Stomach (tissue), 19 donors: ENCODE measurements at regions of chr2 and their contacts with region 1.

Region 1: DNA sequence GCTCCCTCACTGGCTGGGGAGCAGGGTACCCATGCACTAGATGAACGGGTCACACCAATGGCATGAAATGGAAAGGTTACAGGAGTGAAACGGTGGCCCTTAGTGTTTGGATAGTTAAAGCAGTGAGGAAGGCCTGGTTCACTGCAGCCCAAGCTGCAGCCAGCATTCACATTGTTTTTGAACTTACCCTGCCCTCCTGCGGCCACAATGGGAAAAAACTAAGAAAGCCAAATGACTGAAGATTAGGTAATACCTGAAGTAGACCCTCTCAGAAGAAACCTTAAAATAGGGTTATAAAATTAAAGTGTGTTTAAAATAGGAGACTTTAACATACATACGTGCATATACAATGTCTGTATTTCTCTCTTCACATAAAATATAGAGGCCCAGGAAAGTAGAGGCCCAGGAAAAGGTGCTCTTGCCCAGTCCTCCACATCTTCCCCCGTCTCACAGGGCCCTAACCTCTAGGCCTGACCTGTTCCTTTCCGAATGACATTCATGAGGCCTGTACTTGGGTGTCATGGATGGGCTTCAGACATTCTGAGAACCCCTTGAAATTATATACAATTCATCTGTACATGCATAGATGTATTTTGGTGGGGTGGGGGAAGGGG is 33.3 kb downstream of the DOK1 start:
- DNase-seq: peak; percentile 69 to 90
- H3K4me3 ChIP-seq: no peak overlapping the region
- H3K27ac ChIP-seq: no peak overlapping the region
- H3K4me1 ChIP-seq: peaks cover 0 to 6% (median 0%) of the 10 kb centered on the region in 4 donors
- H3K27me3 ChIP-seq: peaks cover 0 to 34% (median 4%) of the 10 kb centered on the region in 3 donors
- CTCF ChIP-seq: peak in 5 of 7 experiments; percentile 45 to 64 (median 47)
- EP300 ChIP-seq: no peak
- POLR2A ChIP-seq: no peak

Region 2: DNA sequence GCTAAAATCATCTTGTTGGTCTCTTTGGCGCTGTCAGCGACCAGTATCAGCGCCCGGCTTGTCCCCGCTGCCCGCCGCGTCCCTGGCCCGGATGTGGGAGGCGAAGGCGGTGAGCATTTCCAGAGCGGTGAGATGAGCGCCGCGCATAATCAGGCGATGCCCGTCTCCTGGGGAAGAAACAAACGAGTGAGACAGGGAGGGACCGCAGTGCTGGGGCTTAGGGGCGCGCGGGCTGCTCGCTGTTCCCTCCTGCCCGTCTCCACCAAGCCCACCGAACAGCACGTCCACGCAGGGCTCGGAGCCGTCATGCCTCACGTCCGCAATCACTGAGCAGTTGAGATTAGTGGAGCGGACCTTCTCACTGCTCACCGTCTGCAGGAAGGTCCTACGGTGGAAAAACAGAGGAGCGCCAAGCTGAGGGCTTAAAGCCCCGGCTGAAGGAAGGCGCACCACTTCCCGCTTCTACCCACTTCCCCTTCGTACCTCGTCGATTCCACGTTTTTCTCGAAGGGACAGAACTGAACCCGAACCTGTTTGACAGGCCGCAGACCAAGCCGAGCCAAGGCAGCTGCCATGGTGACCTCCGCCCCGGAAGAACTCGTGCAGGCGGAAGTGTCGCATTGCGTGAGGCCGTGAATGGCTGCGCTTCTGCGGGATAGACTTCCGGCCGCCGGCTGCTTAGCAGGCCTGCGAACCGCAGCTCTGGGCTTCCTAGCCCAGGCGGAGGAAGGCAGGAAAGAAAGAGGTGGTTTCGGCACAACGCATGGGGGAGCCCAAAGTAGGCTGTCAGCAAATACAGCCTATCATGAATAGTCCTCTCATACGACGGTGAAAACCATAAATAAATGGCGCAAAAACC is 115.5 kb before region 1 on chr2 and contains the start of gene MRPL53:
- intact Hi-C with region 1: no loop called
- DNase-seq: peak; percentile 95 to 98
- H3K4me3 ChIP-seq: peak within 1 kb of the TSS; percentile 54 to 82 (median 66)
- H3K27ac ChIP-seq: peak within 1 kb of the TSS; percentile 78 to 93 (median 86)
- H3K4me1 ChIP-seq: peaks cover 14 to 27% (median 25%) of the 10 kb centered on the region in 4 donors
- H3K27me3 ChIP-seq: no peaks in the 10 kb centered on the region
- CTCF ChIP-seq: no peak
- EP300 ChIP-seq: no peak
- POLR2A ChIP-seq: peak in 1 of 4 donors; percentile 57
- total RNA-seq, gene MRPL53: 4.6 to 335 (median 18.0) TPM

Region 3: DNA sequence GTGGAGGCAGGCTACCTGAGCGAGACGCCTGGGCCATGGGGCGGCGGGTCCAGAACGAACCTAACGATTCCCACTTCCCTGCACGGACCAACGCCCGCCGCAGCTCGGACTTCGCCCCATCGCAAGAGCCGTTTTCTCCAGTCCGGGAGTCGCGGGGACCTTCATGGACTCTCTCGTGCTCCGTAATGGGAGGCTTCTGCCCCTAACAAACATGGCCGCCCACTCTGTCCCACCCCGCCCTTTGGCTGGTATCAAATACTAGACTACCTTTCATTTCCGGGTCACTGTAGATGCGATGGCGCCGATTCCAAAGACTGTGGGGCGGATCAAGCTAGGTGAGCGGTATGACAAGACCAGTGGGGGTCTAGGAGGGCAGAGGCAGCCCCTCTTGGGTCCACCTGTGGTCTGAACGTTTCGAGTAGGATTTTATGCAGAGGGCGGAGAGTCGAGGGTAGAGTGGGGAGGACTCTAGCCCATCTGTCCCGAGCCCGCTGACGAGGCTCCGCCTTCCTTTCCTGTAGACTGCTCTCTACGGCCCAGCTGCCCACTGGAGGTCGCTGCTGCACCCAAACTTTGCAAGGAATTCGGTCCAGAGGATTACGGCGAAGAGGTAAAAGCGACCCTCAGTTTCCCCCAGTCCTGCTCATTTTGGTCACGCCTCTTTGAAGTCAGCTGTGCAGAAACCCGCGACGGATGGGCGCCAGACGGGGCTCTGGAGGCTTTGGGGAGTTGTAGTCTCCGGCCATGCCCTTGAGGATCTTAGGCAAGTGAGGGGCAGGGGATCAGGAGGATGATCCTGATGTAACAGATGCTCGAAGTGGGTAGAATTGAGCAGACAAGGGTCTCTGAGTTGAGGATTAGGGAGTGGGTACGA is 104.7 kb before region 1 on chr2 and contains the starts of genes CCDC142 and TTC31:
- intact Hi-C with region 1: loop called (anchors 5 kb)
- DNase-seq: peak; percentile 97 to 99
- H3K4me3 ChIP-seq: peak within 1 kb of the TSS; percentile 76 to 98 (median 92)
- H3K27ac ChIP-seq: peak within 1 kb of the TSS; percentile 80 to 94 (median 92)
- H3K4me1 ChIP-seq: peaks cover 20 to 49% (median 41%) of the 10 kb centered on the region in 4 donors
- H3K27me3 ChIP-seq: no peaks in the 10 kb centered on the region
- CTCF ChIP-seq: peak in 5 of 7 experiments; percentile 63 to 91 (median 78)
- EP300 ChIP-seq: no peak
- POLR2A ChIP-seq: no peak
- total RNA-seq, gene CCDC142: 19.1 to 78.2 (median 51.3) TPM
- total RNA-seq, gene TTC31: 4.7 to 91.2 (median 20.5) TPM

Region 4: DNA sequence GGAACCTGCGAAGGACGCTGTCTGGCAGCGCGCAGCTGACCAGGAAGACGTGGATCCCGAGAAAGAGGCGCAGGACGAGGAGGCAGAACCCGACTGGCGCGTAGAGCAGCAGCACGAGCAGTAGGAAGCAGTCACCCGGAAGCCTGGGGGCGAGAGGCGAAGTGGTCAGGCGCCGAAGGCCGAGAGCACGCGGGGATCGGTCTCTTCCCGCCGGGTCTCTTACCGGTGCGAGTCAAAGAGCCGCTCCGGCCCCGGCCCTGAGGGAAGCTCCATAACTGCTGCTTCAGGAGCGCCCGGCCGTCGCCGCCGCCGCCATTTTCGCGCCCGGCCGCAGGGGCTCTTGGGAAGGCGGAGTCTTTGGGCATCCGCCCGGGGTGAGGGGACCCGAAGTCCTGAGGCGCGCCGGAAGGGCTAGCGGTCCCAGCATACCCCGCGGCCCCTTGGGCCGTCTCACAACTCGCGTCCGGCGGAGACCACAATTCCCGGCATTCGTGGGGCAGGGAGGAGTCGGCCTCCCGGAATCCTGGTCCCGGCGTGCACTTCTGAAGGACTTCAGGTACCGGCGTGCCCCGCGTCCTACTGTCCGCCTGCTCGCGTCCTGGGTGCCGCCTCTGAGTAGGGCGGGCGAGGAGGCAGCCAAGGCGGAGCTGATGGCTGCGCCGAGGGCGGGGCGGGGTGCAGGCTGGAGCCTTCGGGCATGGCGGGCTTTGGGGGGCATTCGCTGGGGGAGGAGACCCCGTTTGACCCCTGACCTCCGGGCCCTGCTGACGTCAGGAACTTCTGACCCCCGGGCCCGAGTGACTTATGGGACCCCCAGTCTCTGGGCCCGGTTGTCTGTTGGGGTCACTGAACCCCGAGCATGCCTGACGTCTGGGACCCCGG is 58.2 kb before region 1 on chr2 and contains the starts of genes AUP1 and HTRA2:
- intact Hi-C with region 1: loop called (anchors 10 kb)
- DNase-seq: peak; percentile 99 to 100
- H3K4me3 ChIP-seq: peak within 1 kb of the TSS; percentile 78 to 94 (median 92)
- H3K27ac ChIP-seq: peak within 1 kb of the TSS; percentile 68 to 96 (median 91)
- H3K4me1 ChIP-seq: peaks cover 25 to 53% (median 35%) of the 10 kb centered on the region in 4 donors
- H3K27me3 ChIP-seq: no peaks in the 10 kb centered on the region
- CTCF ChIP-seq: peak in 1 of 7 experiments; percentile 6
- EP300 ChIP-seq: no peak
- POLR2A ChIP-seq: peak in 1 of 4 donors; percentile 70
- total RNA-seq, gene AUP1: 74.4 to 244 (median 173) TPM
- total RNA-seq, gene HTRA2: 7.6 to 60.0 (median 23.7) TPM